RWPE1 (cell line): ENCODE measurements at regions of chr9 and their contacts with region 1.

Region 1: DNA sequence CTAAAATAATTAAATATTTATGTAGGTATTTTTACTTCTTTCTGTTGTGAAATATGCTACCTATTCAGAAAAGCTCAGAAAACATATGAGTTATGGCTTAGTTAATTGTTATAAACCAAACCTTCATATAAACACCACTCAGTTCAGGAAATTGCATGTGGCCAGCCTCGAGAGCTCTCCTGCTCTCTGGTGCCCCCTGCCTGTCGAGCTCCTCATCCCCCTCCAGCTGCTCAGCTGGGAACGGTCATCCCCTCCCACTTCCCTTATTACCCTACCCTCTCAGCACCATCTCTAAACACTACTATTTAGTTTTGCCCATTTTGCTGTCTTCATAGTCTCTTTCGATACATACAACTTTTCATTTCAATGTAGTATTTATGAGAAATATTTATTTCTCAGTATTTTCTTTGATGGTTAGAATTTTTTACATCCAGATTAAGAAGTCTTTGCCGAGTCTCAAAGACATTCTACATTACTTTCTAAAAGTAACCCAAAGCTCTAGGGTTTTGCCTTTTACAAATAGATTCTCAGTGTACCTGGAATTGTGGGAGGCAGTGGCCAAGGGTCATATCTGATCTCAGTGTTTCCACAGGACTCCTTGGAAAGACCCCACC is 51.2 kb upstream of the SEMA4D start:
- DNase-seq: peak; percentile 93
- H3K27ac ChIP-seq: peak overlapping the region; percentile 76
- CTCF ChIP-seq: peak; percentile 81

Region 2: GRCh38 chr9:89347651-89348050 is 201.5 kb before region 1 on chr9:
- CTCF ChIA-PET with region 1: interaction called, 10 read pairs
- POLR2A ChIA-PET with region 1: no interaction called
- DNase-seq: no peak
- H3K27ac ChIP-seq: no peak overlapping the region
- CTCF ChIP-seq: no peak

Region 3: DNA sequence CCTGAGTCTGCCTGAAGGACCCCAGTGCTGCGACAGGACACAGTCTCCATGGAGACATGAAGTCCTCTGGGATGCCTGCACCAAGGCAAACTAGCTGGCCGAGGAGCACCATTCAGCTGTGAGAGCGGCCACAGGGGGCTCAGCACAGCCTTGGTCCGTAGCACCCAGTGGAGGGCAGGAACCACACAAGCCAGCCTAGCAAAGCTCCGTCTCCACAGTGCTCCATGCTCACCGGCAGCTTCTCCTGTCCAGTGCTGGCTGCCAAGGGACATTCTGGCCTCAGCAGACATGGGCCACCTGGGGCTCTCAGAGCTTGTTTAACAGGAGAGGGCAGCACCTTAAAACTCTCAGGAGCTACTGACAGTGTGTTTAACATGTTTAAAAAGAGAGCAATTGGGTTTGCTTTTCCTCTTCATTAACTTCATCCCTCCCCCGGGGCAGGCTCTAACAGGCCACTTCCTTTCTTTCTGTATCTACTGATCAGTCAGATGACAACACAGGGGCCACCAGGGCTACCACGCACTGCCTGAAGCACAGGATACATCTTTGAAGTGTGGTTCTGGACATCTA is 173.9 kb before region 1 on chr9:
- CTCF ChIA-PET with region 1: interaction called, 12 read pairs
- POLR2A ChIA-PET with region 1: no interaction called
- DNase-seq: no peak
- H3K27ac ChIP-seq: no peak overlapping the region
- CTCF ChIP-seq: no peak

Region 4: DNA sequence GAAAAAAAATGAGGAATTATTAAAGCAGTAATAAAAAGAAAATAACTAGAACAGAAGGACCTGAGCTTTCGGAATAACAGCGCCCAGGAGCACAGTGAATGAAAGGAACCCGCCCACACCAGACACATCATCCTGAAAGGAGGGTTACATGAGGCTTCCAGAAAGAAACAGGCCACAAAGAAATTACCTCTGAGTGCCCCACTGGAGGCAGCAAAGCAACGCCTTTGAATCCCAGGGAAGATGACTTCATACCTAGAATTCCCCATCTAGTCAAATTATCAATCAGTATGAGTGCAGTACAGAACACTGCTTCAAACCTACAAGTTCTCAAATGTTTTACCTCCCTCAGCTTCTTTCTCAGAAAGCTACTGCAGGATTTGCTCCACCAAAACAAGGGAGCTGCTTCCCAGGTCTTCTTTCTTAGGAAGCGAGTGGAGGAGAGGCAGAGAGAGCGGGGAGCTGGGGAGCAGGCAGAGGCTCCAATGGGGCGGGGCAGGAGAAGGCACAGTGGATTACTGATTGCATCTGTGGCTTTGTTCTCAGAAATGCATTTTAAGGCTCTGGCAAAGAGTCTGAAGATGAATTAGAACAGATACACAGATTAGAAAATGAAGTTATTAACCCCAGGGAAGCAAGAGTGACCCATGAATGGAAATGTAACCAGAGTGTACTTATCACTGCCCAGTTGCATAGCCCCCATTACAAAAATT is 138.3 kb before region 1 on chr9:
- CTCF ChIA-PET with region 1: interaction called, 18 read pairs
- POLR2A ChIA-PET with region 1: no interaction called
- DNase-seq: peak; percentile 59
- H3K27ac ChIP-seq: no peak overlapping the region
- CTCF ChIP-seq: no peak

Region 5: DNA sequence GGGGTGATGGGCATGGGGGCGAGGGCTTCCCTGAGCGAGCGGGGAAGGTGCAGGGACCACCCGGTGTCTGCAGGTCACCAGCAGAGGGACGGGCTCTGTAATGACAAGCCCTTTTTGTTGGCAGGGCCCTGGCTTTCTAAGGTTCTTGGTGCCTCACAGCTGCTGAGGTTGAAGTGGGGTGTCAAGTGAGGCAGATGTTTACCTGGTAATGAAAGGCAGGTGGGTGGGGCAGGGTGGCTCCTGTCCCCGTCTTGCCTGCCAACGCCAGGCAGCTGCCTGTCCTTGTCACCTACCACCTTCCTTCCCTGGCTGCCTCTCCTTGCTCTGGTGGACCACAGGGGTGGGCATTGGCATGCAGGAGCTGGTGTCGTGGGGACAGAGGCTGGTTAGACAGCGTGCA is 10.3 kb before region 1 on chr9:
- CTCF ChIA-PET with region 1: interaction called, 11 read pairs
- POLR2A ChIA-PET with region 1: no interaction called
- DNase-seq: no peak
- H3K27ac ChIP-seq: no peak overlapping the region
- CTCF ChIP-seq: no peak